Activated B cell treated with CpG ODN at 0.5 μM for 24 hours (primary cell): ENCODE measurements at regions of chr7 and their contacts with region 1.

Region 1: GRCh38 chr7:18530224-18531179 is 35.0 kb downstream of the HDAC9 start:
- DNase-seq: no peak
- ATAC-seq: peak; percentile 81
- H3K4me3 Mint-ChIP-seq: peak overlapping the region; percentile 72
- H3K27ac Mint-ChIP-seq: peak overlapping the region; percentile 90
- H3K4me1 Mint-ChIP-seq: peaks cover 86% of the 10 kb centered on the region
- H3K27me3 Mint-ChIP-seq: no peaks in the 10 kb centered on the region
- CTCF ChIP-seq: no peak

Region 2: GRCh38 chr7:16891338-16891737 is 1639.2 kb before region 1 on chr7:
- CTCF ChIA-PET with region 1: no interaction called
- POLR2A ChIA-PET with region 1: no interaction called
- intact Hi-C with region 1: no loop called
- DNase-seq: no peak
- ATAC-seq: peak; percentile 45
- H3K4me3 Mint-ChIP-seq: no peak overlapping the region
- H3K27ac Mint-ChIP-seq: no peak overlapping the region
- H3K4me1 Mint-ChIP-seq: peaks cover 4% of the 10 kb centered on the region
- H3K27me3 Mint-ChIP-seq: no peaks in the 10 kb centered on the region
- CTCF ChIP-seq: no peak

Region 3: GRCh38 chr7:18503126-18503866 is 27.2 kb before region 1 on chr7:
- CTCF ChIA-PET with region 1: interaction called, 8 read pairs
- POLR2A ChIA-PET with region 1: interaction called, 50 read pairs
- intact Hi-C with region 1: no loop called
- DNase-seq: no peak
- ATAC-seq: peak; percentile 35
- H3K4me3 Mint-ChIP-seq: peak overlapping the region; percentile 67
- H3K27ac Mint-ChIP-seq: peak overlapping the region; percentile 91
- H3K4me1 Mint-ChIP-seq: peaks cover 87% of the 10 kb centered on the region
- H3K27me3 Mint-ChIP-seq: no peaks in the 10 kb centered on the region
- CTCF ChIP-seq: no peak

Region 4: DNA sequence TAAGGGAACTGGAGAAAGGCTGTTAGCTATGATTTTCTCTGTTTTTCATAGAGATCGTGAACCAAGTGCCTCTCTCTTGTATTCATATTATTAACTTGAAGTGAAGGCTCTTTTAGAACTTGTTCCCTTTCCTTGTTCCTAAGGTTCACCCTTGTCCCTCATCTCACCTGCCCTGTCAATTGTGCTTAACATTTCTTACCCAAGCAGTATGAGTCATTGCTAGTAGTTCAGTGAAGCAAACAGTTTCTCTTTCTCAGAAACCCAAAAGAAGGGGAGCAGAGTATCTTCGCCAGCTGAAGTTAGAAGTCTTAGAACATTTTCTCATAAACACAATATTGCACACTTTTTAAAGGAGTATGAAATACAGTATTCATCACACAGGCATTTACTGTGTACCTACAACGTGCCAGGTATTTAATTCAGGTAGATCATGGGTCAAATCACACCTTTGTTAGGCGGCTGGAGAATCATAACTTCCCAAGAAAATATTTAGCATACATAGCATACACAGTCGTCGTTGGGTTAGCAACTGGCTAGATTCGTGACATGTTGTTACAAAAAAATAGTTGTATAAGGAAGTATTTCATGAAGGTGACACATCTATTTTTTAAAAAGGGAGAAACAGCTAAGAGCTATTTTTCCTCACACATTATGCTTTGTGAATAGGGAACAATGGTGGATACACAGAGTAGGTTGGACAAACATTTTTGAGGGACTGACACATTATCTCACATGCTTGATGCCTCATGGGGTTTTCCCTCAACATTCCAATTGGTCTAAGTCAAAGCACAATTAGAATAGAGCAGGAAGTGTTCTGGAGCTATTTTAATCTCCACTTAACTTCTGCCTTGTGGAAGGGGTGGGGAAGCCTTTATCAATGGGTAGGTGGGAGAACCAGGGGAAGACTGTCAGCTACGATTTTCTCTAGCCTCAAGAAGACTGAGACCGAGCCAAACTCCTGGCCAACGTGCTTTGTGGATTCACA is 21.8 kb before region 1 on chr7:
- CTCF ChIA-PET with region 1: interaction called, 6 read pairs
- POLR2A ChIA-PET with region 1: interaction called, 50 read pairs
- intact Hi-C with region 1: loop called (anchors 1 kb)
- DNase-seq: no peak
- ATAC-seq: peak; percentile 74
- H3K4me3 Mint-ChIP-seq: peak overlapping the region; percentile 82
- H3K27ac Mint-ChIP-seq: peak overlapping the region; percentile 99
- H3K4me1 Mint-ChIP-seq: peaks cover 89% of the 10 kb centered on the region
- H3K27me3 Mint-ChIP-seq: no peaks in the 10 kb centered on the region
- CTCF ChIP-seq: no peak